ENCODE measurements at regions of chr21 and their contacts with region 1.

Region 1: GRCh38 chr21:33232291-33233034 is 2.7 kb downstream of the IFNAR2 start:
- DNase-seq: no peak
- ATAC-seq: no peak
- H3K4me3 Mint-ChIP-seq: peak overlapping the region; percentile 87
- H3K27ac Mint-ChIP-seq: peak overlapping the region; percentile 85
- H3K4me1 Mint-ChIP-seq: peaks cover 50% of the 10 kb centered on the region
- H3K27me3 Mint-ChIP-seq: no peaks in the 10 kb centered on the region

Region 2: GRCh38 chr21:33266050-33266788 is 33.8 kb after region 1 on chr21 and contains the start of gene IL10RB:
- POLR2A ChIA-PET with region 1: interaction called, 10 read pairs
- DNase-seq: peak; percentile 88
- ATAC-seq: peak; percentile 77
- H3K4me3 Mint-ChIP-seq: peak within 1 kb of the TSS; percentile 97
- H3K27ac Mint-ChIP-seq: peak within 1 kb of the TSS; percentile 88
- H3K4me1 Mint-ChIP-seq: peaks cover 44% of the 10 kb centered on the region
- H3K27me3 Mint-ChIP-seq: no peaks in the 10 kb centered on the region
- total RNA-seq, gene IL10RB: 40.6 to 44.1 TPM